Dorsolateral prefrontal cortex (tissue), 120 donors: ENCODE measurements at regions of chr17 and their contacts with region 1.

Region 1: GRCh38 chr17:60142872-60143499 is 6.8 kb upstream of the CA4 start:
- DNase-seq: peak; percentile 67 to 90 (median 85)
- H3K4me3 ChIP-seq: peak overlapping the region in 25 of 59 donors; percentile 5 to 49 (median 30)
- H3K27ac ChIP-seq: peak overlapping the region in 4 of 59 donors; percentile 2 to 60 (median 49)
- H3K27me3 ChIP-seq: peaks cover 0 to 54% (median 33%) of the 10 kb centered on the region in 45 donors
- CTCF ChIP-seq: peak; percentile 39 to 88 (median 79)

Region 2: DNA sequence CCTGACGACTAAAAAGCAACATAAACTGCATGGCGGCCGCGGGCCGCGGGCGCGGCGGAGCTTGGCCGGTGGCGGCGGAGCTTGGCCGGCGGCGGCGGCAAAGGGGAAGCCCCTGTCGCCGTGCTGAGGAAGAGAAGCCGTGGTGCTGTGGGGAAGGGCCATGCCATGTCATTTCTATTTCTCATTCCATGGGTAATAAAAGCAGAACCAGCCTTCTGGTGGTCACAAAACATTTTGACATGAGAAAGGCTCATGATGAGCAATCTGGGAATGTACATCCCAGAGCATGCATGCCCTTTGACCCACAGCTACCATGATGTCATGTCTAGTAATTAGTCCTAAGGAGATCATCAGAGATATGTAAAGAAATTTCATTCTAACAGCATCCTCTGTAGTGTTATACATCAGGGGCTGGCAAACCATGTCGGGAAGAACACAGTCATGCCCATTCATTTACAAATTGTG is 40.3 kb before region 1 on chr17:
- intact Hi-C with region 1: loop called in 1 of 2 experiments (anchors 2 kb)
- DNase-seq: peak in 2 of 10 donors; percentile 16 to 53
- H3K4me3 ChIP-seq: peak overlapping the region in 48 of 59 donors; percentile 0 to 55 (median 34)
- H3K27ac ChIP-seq: peak overlapping the region in 50 of 59 donors; percentile 0 to 79 (median 54)
- H3K27me3 ChIP-seq: no peaks in the 10 kb centered on the region
- CTCF ChIP-seq: no peak

Region 3: DNA sequence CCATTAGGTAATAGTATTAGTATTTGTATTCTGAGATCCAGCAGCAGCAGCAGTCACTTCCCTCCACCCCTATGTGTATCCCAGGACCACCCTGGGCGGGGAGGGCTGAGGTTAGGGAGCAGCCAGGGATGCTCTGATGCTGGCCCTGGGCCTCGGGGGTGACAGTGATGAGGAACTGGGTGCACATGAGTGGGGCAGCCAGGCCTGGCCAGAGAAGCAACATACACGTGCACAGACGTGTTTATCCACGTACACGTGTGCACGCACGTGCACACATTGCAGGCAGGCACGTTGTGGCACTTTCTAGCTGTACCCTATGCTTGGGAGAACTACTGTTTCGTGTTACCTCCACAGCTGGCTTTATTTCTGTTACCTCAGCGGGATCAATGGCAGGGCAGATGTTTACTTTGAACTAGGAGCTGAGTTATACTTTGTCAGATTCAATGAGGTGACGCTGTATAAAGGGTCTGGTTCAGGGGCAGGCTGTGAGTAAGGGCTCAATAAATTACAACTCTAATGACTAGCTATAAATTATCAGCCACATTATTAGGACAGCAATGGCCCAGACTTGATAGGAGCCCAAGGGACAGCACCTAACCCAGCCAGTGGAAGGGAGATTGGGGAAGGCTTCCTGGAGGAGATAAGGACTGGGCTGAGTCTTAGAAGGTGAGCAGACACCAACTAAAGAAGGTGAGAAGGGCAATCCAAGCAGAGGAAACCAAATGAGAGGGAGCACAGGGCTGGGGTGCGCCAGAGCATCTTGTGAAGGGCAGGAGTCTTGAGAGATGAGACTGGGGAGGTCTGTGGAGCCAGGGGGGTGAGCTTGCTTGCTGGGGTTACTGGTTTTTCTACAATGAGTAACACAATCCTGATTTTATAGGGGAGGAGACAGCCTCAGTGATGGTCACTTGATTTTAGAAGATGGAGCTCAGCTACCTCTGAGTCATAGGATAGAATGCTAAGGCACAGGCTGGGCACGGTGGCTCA is 15.6 kb before region 1 on chr17:
- intact Hi-C with region 1: no loop called
- DNase-seq: peak in 1 of 10 donors; percentile 5
- H3K4me3 ChIP-seq: no peak overlapping the region
- H3K27ac ChIP-seq: no peak overlapping the region
- H3K27me3 ChIP-seq: no peaks in the 10 kb centered on the region
- CTCF ChIP-seq: no peak

Region 4: GRCh38 chr17:60169921-60170742 is 27.1 kb after region 1 on chr17:
- intact Hi-C with region 1: loop called in 1 of 2 experiments (anchors 2 kb)
- DNase-seq: peak in 1 of 10 donors; percentile 43
- H3K4me3 ChIP-seq: no peak overlapping the region
- H3K27ac ChIP-seq: peak overlapping the region in 58 of 59 donors; percentile 47 to 94 (median 85)
- H3K27me3 ChIP-seq: no peaks in the 10 kb centered on the region
- CTCF ChIP-seq: peak in 1 of 56 donors; percentile 15

Region 5: GRCh38 chr17:60435244-60436167 is 292.5 kb after region 1 on chr17:
- intact Hi-C with region 1: loop called in 1 of 2 experiments (anchors 10 kb)
- DNase-seq: peak in 8 of 10 donors; percentile 45 to 84 (median 67)
- H3K4me3 ChIP-seq: peak overlapping the region in 33 of 59 donors; percentile 1 to 50 (median 30)
- H3K27ac ChIP-seq: peak overlapping the region in 47 of 59 donors; percentile 11 to 84 (median 68)
- H3K27me3 ChIP-seq: no peaks in the 10 kb centered on the region
- CTCF ChIP-seq: peak; percentile 73 to 99 (median 96)